T-cell (primary cell): ENCODE measurements at regions of chr3 and their contacts with region 1.

Region 1: DNA sequence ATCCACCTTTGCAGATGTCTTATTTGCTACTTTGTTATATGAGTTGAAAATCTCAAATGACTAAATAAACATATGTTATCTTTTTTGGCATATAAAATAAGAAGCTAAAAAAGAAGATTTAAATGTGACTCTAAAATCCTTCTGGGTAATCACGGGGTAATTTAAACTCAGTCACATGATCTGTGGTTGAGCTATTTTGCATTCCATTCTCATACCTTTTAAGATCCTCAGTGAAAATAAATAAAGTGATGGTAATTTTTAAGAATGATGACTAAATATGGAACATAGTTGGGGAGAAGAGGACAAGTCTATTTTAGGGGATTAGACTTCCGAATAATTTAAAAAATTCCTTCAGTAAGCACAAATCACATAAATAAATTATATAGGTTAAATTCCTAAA is 1076.8 kb downstream of the TUSC7 start:
- DNase-seq: no peak
- ATAC-seq: no peak
- H3K4me3 ChIP-seq: no peak overlapping the region
- H3K4me3 Mint-ChIP-seq: no peak overlapping the region
- H3K27ac ChIP-seq: no peak overlapping the region
- H3K27ac Mint-ChIP-seq: no peak overlapping the region
- H3K4me1 ChIP-seq: no peaks in the 10 kb centered on the region
- H3K4me1 Mint-ChIP-seq: no peaks in the 10 kb centered on the region
- H3K27me3 ChIP-seq: no peaks in the 10 kb centered on the region
- H3K27me3 Mint-ChIP-seq: no peaks in the 10 kb centered on the region

Region 2: GRCh38 chr3:117660941-117661817 is 125.2 kb before region 1 on chr3:
- CTCF ChIA-PET with region 1: no interaction called
- POLR2A ChIA-PET with region 1: interaction called in 1 of 2 experiments, 19 read pairs
- DNase-seq: no peak
- ATAC-seq: no peak
- H3K4me3 ChIP-seq: no peak overlapping the region
- H3K4me3 Mint-ChIP-seq: no peak overlapping the region
- H3K27ac ChIP-seq: no peak overlapping the region
- H3K27ac Mint-ChIP-seq: no peak overlapping the region
- H3K4me1 ChIP-seq: no peaks in the 10 kb centered on the region
- H3K4me1 Mint-ChIP-seq: no peaks in the 10 kb centered on the region
- H3K27me3 ChIP-seq: no peaks in the 10 kb centered on the region
- H3K27me3 Mint-ChIP-seq: no peaks in the 10 kb centered on the region